ENCODE measurements at regions of chr12 and their contacts with region 1.

Region 1: DNA sequence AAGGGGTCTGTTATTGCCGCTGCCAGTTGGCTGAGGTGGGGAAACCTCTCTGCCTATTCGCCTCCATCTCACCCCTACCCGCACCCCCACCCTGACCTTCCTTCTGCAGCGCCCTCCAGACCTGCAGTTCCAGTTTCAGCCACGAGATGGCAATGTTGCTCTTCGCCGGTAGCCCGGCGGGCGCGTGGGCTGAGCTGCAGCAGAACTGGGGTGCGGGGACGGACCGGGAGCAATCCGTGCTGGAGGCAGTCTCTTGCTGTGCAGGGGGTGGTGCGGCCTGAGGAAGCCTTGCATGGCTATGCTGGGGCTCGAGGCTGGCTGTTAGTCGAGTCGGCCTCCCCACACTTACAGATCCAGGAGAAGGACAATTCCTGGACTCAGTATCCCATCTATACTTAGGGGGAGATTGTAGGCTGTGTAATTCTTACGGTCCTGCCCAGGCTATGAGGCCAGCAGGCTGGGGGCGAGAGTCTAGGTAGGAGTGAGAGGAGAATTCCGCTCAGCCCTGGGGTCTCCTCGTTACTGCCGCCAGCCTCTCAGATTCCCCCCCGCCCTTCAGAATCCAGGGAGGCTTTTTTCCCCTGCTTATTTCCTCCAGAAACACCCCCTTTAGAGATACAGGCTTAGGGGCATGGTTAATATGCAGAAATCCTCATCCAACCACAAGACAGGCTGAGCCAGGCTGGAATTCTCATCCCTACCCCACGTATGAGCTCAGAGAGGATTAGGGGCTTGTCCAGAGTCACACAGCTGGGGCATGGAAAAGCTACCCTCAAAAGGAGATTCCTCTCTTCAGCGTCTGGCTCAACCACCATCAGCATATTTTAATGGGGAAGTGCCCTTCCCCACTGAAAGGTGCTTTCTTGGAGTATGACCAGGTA is 118.2 kb downstream of the AACS start:
- DNase-seq: peak; percentile 31 to 86 (median 72)
- ATAC-seq: peak; percentile 85
- H3K4me3 ChIP-seq: no peak overlapping the region
- H3K4me3 Mint-ChIP-seq: peak overlapping the region in 6 of 10 donors; percentile 17 to 47 (median 34)
- H3K27ac ChIP-seq: no peak overlapping the region
- H3K27ac Mint-ChIP-seq: no peak overlapping the region
- H3K4me1 ChIP-seq: no peaks in the 10 kb centered on the region
- H3K4me1 Mint-ChIP-seq: peaks cover 5 to 11% (median 7%) of the 10 kb centered on the region in 7 donors
- H3K27me3 ChIP-seq: peaks cover 0 to 5% of the 10 kb centered on the region in 2 donors
- H3K27me3 Mint-ChIP-seq: peaks cover 47 to 65% (median 58%) of the 10 kb centered on the region in 5 donors

Region 2: DNA sequence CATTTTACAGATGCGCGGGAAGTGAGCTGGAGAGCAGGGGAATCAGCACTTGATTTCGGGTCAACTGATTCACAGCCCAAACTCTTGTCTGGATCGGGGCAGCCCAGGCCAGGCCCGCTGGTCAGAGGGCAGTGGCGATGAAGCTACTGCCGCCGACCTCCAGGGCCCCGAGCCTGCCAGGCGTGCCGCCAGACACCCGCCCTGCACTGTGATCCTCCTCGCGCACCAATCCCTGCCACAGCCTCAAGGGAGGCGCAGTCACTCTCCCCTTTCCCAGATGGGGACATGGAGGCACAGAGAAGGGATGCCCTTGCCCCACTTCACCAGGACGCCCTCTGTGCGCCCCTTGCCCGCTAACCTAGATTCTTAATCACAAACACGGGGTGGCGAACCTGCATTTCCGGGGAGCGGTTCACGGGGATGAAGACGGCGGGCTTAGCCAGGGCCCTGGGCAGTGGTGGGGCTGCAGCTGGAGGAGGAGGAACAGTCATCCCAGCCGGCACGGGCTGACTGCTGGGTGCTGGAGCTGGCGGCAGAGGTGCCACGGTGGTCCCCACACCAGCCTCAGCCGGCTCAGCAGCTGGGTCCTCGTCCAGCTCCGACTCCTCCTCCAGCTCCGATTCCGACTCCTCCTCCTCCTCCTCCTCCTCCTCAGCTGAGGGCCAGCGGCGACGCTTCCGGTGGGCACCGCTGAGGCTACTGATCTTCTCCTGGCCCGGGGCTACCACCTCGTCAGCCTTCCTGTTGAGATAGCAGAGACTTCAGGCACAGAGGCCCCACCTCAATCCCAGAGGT is 203.1 kb before region 1 on chr12:
- CTCF ChIA-PET with region 1: no interaction called
- POLR2A ChIA-PET with region 1: no interaction called
- intact Hi-C with region 1: loop called in 1 of 2 experiments (anchors 10 kb)
- DNase-seq: no peak
- ATAC-seq: no peak
- H3K4me3 ChIP-seq: no peak overlapping the region
- H3K4me3 Mint-ChIP-seq: no peak overlapping the region
- H3K27ac ChIP-seq: no peak overlapping the region
- H3K27ac Mint-ChIP-seq: no peak overlapping the region
- H3K4me1 ChIP-seq: no peaks in the 10 kb centered on the region
- H3K4me1 Mint-ChIP-seq: peaks cover 0 to 1% (median 0%) of the 10 kb centered on the region in 7 donors
- H3K27me3 ChIP-seq: no peaks in the 10 kb centered on the region
- H3K27me3 Mint-ChIP-seq: no peaks in the 10 kb centered on the region

Region 3: DNA sequence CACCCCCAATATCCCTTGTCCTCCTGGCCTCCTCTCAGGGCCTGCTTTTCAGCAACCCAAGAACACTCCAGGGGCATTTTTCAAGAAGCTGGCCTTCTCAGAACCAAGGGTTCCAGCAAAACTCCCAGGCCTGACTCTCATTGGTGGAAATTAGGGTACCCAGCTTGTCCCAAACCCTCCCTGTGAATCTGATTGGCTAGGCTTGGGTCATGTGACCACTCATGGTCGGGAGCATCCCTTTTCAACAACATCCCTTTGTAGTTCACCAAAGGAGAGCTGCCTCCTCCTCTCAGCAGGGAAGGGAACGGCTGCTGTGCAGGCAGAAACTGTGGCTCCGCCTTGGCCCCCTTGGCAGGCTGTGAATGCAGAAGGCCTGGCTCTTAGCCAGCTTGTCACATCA is 23.7 kb before region 1 on chr12:
- CTCF ChIA-PET with region 1: no interaction called
- POLR2A ChIA-PET with region 1: no interaction called
- intact Hi-C with region 1: no loop called
- DNase-seq: no peak
- ATAC-seq: no peak
- H3K4me3 ChIP-seq: no peak overlapping the region
- H3K4me3 Mint-ChIP-seq: no peak overlapping the region
- H3K27ac ChIP-seq: no peak overlapping the region
- H3K27ac Mint-ChIP-seq: no peak overlapping the region
- H3K4me1 ChIP-seq: no peaks in the 10 kb centered on the region
- H3K4me1 Mint-ChIP-seq: no peaks in the 10 kb centered on the region
- H3K27me3 ChIP-seq: no peaks in the 10 kb centered on the region
- H3K27me3 Mint-ChIP-seq: peaks cover 0 to 6% (median 0%) of the 10 kb centered on the region in 5 donors

Region 4: DNA sequence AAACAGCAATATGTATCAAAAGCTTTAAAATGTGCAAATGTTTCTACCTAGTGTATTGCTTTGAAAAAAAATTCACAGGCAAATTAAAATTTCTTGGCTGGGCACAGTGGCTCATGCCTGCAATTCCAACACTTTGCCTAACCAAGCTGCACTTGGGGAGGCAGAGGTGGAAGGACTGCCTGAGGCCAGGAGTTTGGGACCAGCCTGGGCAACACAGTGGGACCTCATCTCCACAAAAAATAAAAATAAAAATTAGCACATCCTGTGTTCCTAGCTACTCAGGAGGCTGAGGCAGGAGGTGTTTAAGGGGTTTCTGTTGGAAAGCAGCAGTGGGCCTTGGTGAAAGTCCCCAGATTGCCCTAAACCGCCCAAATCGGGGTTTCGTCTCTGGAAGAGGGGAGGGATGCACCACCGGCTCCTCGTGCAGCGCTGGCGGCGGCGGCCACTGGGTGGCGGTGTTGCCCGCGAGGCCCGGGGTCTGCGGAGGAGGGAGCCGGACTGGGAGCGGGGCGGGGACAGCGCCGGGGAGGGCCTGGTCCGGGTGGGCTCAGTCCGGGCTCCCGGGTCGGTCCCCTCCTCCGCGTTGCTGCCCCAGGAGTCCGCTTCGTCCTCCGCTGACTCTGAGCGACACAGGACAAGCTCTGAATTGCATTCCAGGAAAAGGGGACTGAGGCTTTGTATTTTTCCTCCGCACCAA is 147.4 kb after region 1 on chr12:
- CTCF ChIA-PET with region 1: no interaction called
- POLR2A ChIA-PET with region 1: no interaction called
- intact Hi-C with region 1: loop called in 1 of 2 experiments (anchors 5 kb)
- DNase-seq: peak in 6 of 9 donors; percentile 5 to 72 (median 15)
- ATAC-seq: peak; percentile 51
- H3K4me3 ChIP-seq: no peak overlapping the region
- H3K4me3 Mint-ChIP-seq: peak overlapping the region in 1 of 10 donors; percentile 6
- H3K27ac ChIP-seq: no peak overlapping the region
- H3K27ac Mint-ChIP-seq: no peak overlapping the region
- H3K4me1 ChIP-seq: no peaks in the 10 kb centered on the region
- H3K4me1 Mint-ChIP-seq: no peaks in the 10 kb centered on the region
- H3K27me3 ChIP-seq: peaks cover 0 to 4% of the 10 kb centered on the region in 2 donors
- H3K27me3 Mint-ChIP-seq: peaks cover 13 to 60% (median 53%) of the 10 kb centered on the region in 5 donors

Region 5: DNA sequence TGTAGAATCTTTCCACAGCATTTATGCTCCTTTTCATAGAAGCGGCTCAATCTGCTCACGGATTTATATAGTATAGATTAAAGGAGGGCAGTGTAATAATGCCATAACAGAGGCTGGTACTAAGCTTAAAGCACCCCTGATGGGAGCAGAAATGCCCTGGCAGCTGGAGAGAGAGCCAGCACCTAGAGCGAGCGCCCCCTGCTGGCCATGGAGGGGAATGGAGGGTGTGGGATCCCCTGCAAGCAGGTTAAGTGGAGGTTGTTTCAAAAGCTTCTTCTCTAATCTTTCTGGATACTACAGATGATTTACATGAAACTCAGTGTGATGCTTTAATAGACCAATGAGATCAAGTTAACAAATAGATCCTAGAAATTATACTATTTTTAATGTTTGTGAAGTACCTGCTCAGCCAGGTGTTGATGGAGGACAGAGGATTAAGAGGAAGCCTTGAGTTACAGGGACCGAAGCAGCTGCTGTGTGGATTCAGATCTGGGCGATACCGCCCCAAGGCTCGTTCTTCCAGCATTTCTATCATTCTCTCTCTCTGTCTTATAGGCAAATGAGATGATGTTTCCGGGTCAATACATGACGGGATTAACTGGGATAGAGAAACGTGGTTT is 1564.2 kb after region 1 on chr12:
- CTCF ChIA-PET with region 1: no interaction called
- POLR2A ChIA-PET with region 1: no interaction called
- intact Hi-C with region 1: loop called in 1 of 2 experiments (anchors 2 kb)
- DNase-seq: peak in 7 of 9 donors; percentile 18 to 63 (median 40)
- ATAC-seq: peak; percentile 72
- H3K4me3 ChIP-seq: no peak overlapping the region
- H3K4me3 Mint-ChIP-seq: no peak overlapping the region
- H3K27ac ChIP-seq: no peak overlapping the region
- H3K27ac Mint-ChIP-seq: no peak overlapping the region
- H3K4me1 ChIP-seq: no peaks in the 10 kb centered on the region
- H3K4me1 Mint-ChIP-seq: peaks cover 0 to 4% (median 0%) of the 10 kb centered on the region in 7 donors
- H3K27me3 ChIP-seq: no peaks in the 10 kb centered on the region
- H3K27me3 Mint-ChIP-seq: no peaks in the 10 kb centered on the region

Region 6: DNA sequence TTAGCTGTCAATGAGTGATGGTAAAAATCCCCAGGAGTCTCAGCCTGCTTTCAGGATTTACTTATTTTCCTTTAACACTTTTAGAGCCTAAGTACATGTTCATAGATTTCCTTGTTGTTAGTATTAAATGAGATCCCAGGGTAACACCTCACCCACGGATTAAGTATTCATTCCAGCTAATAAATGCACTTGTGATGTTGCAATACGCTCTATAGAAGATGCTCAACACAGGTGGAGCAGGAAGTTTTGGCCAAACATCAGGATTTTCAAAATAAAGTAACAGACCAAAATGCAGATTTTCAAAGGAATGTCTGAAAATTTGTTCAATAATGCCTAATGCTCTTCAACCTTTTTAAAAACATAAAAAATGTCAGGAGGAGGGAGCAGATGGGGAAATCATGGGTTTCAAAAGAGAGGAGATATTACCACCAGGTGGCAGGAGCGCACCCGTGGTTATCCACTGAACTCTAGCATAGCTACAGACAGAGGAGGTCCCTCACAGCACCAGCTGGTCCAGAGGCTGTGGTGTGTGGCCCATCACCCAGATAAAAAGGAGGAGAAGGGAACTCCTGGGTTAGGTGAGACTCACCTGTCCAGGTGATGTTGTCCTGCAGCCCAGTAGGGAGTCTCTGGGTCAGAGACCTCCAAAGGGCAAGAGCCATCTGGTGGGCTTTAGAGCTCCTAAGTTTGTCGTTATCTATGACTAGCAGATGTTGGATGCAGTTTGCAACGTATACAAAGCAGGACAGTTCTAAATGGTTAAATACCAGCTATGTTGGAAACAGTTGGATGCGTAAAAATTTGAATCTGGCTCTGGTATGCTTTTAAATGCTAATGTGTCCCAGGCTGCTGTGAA is 1925.2 kb after region 1 on chr12:
- CTCF ChIA-PET with region 1: no interaction called
- POLR2A ChIA-PET with region 1: no interaction called
- intact Hi-C with region 1: loop called in 1 of 2 experiments (anchors 5 kb)
- DNase-seq: peak in 6 of 9 donors; percentile 7 to 35 (median 32)
- ATAC-seq: peak; percentile 45
- H3K4me3 ChIP-seq: no peak overlapping the region
- H3K4me3 Mint-ChIP-seq: no peak overlapping the region
- H3K27ac ChIP-seq: no peak overlapping the region
- H3K27ac Mint-ChIP-seq: peak overlapping the region in 1 of 9 donors; percentile 12
- H3K4me1 ChIP-seq: no peaks in the 10 kb centered on the region
- H3K4me1 Mint-ChIP-seq: no peaks in the 10 kb centered on the region
- H3K27me3 ChIP-seq: no peaks in the 10 kb centered on the region
- H3K27me3 Mint-ChIP-seq: peaks cover 5 to 56% (median 30%) of the 10 kb centered on the region in 5 donors

Measured in naive thymus-derived CD4-positive, alpha-beta T cell (primary cell).